ENCODE measurements at regions of chr16 and their contacts with region 1.

Region 1: GRCh38 chr16:96935-97381 is 18.9 kb downstream of the MPG start:
- DNase-seq: peak; percentile 90 to 92 (median 90)
- H3K4me3 ChIP-seq: no peak overlapping the region
- H3K4me3 Mint-ChIP-seq: no peak overlapping the region
- H3K27ac ChIP-seq: no peak overlapping the region
- H3K27ac Mint-ChIP-seq: no peak overlapping the region
- H3K4me1 ChIP-seq: no peaks in the 10 kb centered on the region
- H3K4me1 Mint-ChIP-seq: peaks cover 7% of the 10 kb centered on the region
- H3K27me3 ChIP-seq: no peaks in the 10 kb centered on the region
- H3K27me3 Mint-ChIP-seq: peaks cover 0 to 4% (median 0%) of the 10 kb centered on the region in 3 donors
- CTCF ChIP-seq: peak; percentile 98

Region 2: GRCh38 chr16:65671-66137 is 31.3 kb before region 1 on chr16:
- intact Hi-C with region 1: loop called (anchors 1 kb)
- DNase-seq: peak; percentile 64 to 76 (median 73)
- H3K4me3 ChIP-seq: no peak overlapping the region
- H3K4me3 Mint-ChIP-seq: no peak overlapping the region
- H3K27ac ChIP-seq: no peak overlapping the region
- H3K27ac Mint-ChIP-seq: no peak overlapping the region
- H3K4me1 ChIP-seq: no peaks in the 10 kb centered on the region
- H3K4me1 Mint-ChIP-seq: peaks cover 5% of the 10 kb centered on the region
- H3K27me3 ChIP-seq: peaks cover 0 to 15% of the 10 kb centered on the region in 2 donors
- H3K27me3 Mint-ChIP-seq: peaks cover 13 to 38% (median 19%) of the 10 kb centered on the region in 3 donors
- CTCF ChIP-seq: peak; percentile 90

Measured in CD14-positive monocyte (primary cell).